ENCODE measurements at regions of chr1 and their contacts with region 1.

Region 1: GRCh38 chr1:227946624-227947385 is 927 bp downstream of the WNT9A start:
- DNase-seq: peak in 8 of 9 experiments; percentile 45 to 82 (median 60)
- ATAC-seq: peak; percentile 64
- H3K4me3 ChIP-seq: peak overlapping the region; percentile 13 to 31
- H3K4me3 Mint-ChIP-seq: peak overlapping the region; percentile 74
- H3K27ac ChIP-seq: no peak overlapping the region
- H3K27ac Mint-ChIP-seq: no peak overlapping the region
- H3K4me1 ChIP-seq: peaks cover 19% of the 10 kb centered on the region
- H3K4me1 Mint-ChIP-seq: peaks cover 13% of the 10 kb centered on the region
- H3K27me3 ChIP-seq: peaks cover 14% of the 10 kb centered on the region in 2 experiments
- H3K27me3 Mint-ChIP-seq: peaks cover 16% of the 10 kb centered on the region
- CTCF ChIP-seq: peak; percentile 56

Region 2: DNA sequence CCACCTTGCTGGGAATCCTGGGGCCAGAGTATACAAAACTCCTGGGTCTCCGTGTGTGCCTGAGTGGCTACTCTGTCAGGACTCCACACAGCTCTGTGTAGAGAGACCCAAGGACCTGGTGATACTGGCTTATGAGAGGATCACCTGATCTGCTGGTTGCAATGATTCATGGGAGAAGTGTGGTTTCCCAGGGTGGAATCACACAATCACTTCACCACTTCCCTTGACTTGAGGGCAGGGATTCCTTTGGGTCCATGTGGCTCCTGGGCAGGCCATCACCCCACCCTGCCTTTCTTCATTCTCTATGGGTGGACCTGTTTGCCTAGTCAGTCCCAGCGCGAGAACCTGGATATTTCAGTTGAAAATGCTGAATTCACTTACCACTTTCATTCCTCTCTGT is 118.0 kb before region 1 on chr1:
- CTCF ChIA-PET with region 1: no interaction called
- POLR2A ChIA-PET with region 1: no interaction called
- intact Hi-C with region 1: loop called in 1 of 2 experiments (anchors 10 kb)
- DNase-seq: peak in 1 of 9 experiments; percentile 24
- ATAC-seq: no peak
- H3K4me3 ChIP-seq: no peak overlapping the region
- H3K4me3 Mint-ChIP-seq: no peak overlapping the region
- H3K27ac ChIP-seq: no peak overlapping the region
- H3K27ac Mint-ChIP-seq: no peak overlapping the region
- H3K4me1 ChIP-seq: peaks cover 15% of the 10 kb centered on the region
- H3K4me1 Mint-ChIP-seq: peaks cover 20% of the 10 kb centered on the region
- H3K27me3 ChIP-seq: no peaks in the 10 kb centered on the region
- H3K27me3 Mint-ChIP-seq: no peaks in the 10 kb centered on the region
- CTCF ChIP-seq: no peak

Region 3: GRCh38 chr1:227849251-227849650 is 97.6 kb before region 1 on chr1:
- CTCF ChIA-PET with region 1: interaction called, 11 read pairs
- POLR2A ChIA-PET with region 1: no interaction called
- intact Hi-C with region 1: no loop called
- DNase-seq: no peak
- ATAC-seq: no peak
- H3K4me3 ChIP-seq: no peak overlapping the region
- H3K4me3 Mint-ChIP-seq: no peak overlapping the region
- H3K27ac ChIP-seq: no peak overlapping the region
- H3K27ac Mint-ChIP-seq: no peak overlapping the region
- H3K4me1 ChIP-seq: no peaks in the 10 kb centered on the region
- H3K4me1 Mint-ChIP-seq: peaks cover 3% of the 10 kb centered on the region
- H3K27me3 ChIP-seq: no peaks in the 10 kb centered on the region
- H3K27me3 Mint-ChIP-seq: peaks cover 3% of the 10 kb centered on the region
- CTCF ChIP-seq: no peak

Measured in CD8-positive, alpha-beta T cell (primary cell).